ENCODE measurements at regions of chr18 and their contacts with region 1.

Region 1: DNA sequence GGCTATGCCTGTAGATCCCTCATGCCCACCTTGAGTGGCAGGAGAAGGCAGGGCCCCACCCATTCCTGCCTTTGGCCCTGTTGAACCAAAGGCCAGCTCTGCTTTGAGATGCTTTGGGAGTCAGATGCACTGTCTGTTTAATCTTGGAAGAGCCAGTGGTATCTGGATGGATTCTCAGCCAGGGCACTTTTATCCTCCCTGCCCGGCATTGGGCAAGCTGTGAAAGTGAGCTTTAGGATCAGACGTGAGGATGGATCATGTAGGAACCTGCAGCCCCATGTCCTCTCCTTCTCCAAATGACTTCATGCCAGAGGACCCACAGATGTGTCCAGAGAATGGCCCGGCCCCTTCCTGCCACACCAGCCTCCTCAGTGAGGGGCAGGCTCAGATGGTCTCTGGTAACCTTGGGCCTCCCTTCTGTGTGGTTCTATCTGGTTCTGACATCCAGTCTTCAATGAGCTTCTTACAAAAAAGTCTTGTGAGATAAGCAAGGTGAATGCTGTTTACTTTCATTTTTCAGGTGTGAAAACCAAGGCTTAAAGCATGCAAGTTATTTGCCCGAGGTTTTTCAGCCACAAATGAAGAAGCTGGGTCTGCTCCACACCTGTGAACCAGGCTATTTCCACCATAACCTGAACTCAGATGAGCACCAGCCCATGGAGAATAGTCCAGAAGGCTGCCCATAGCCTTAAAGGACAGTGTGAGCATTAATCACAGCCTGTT is 123.8 kb downstream of the KCTD1 start:
- DNase-seq: no peak
- H3K4me3 ChIP-seq: no peak overlapping the region
- H3K27ac ChIP-seq: no peak overlapping the region
- H3K4me1 ChIP-seq: no peaks in the 10 kb centered on the region
- CTCF ChIP-seq: no peak

Region 2: DNA sequence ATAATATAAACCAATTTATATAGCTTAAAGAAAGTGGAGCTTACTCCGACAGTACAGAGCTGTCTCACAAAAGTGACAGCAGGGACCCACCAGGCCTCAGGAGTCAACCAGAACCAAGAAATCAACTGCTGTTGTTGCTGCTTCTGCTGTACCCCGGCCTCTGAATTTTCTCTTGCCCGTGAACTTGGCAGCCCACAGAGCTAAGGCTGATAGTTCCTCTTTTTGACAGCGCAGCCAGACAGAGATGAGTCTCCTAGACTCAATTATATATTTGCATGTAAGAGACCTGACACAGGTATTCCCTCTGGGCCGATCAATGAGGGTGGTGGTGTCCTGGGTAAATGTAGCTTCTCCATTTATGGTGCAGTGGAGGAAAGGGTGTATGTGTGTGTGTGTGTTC is 14.4 kb after region 1 on chr18:
- CTCF ChIA-PET with region 1: no interaction called
- POLR2A ChIA-PET with region 1: interaction called, 12 read pairs
- intact Hi-C with region 1: no loop called
- DNase-seq: peak; percentile 72
- H3K4me3 ChIP-seq: no peak overlapping the region
- H3K27ac ChIP-seq: no peak overlapping the region
- H3K4me1 ChIP-seq: peaks cover 15% of the 10 kb centered on the region
- CTCF ChIP-seq: no peak